ENCODE measurements at regions of chr5 and their contacts with region 1.

Region 1: DNA sequence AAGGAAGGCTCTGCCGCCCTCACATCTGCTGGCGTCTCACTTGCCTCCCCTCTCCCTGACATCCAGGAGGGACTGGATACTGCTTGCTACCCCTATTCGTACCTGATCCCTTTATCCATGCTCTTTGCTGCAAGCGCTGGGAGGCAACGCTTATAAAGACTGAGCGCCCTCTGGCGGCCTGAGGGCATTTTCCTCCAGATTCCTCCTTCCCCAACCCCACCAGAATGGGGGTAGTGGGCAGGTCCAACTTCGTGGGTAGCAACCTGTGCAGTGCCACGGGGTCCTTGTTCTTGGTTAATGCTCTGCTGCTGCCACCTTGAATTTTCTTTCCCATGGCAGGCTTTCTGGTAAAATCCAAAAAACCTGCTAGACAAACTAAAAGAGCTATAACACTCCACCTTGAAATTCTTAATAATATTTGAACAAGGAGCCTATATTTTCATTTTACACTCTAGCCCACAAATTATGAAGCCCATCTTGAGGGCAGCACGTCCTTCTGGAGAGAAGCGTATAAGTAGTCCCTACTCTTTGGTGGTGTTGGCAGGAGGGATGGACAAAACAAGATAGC is 52.4 kb downstream of the JADE2 start:
- DNase-seq: peak; percentile 91
- ATAC-seq: peak; percentile 64

Region 2: DNA sequence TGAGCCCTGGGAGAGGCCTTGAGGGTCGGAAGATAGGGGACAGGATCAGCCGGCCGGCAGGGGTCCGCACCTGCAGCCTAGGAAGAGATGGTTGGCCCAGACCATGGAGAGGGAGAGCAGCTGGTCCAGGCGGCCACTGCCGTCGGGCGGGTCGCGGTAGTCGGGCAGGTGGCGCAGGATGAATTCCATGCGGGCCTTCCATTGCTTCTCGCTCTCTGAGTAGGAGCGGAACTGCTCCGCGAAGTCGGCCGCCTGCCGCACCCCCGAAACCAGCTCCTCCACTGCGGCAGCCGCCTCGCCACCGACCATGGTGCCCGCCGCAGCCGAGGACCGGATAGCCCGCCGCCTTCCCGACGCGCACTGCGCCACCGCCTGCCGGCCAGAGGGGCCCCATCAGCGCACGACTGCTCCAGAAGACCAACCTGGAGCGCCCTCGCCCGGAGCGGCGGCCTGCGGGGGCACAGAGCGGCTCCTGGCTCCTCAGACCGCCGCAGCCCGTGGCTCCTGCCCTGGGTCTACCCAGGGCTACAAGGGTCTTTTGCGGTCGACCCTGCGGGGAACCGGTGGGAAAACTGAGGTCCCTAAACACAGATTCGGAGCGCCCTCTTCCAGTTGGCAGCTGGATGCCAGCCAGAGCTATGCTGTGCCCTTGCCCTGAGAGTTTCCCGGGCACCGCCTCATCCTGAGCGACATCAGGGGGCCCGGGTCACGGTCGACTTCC is 166.2 kb before region 1 on chr5 and contains the start of gene CDKN2AIPNL:
- intact Hi-C with region 1: loop called (anchors 10 kb)
- DNase-seq: peak; percentile 94
- ATAC-seq: peak; percentile 99
- total RNA-seq, gene CDKN2AIPNL: 12.4 TPM

Region 3: DNA sequence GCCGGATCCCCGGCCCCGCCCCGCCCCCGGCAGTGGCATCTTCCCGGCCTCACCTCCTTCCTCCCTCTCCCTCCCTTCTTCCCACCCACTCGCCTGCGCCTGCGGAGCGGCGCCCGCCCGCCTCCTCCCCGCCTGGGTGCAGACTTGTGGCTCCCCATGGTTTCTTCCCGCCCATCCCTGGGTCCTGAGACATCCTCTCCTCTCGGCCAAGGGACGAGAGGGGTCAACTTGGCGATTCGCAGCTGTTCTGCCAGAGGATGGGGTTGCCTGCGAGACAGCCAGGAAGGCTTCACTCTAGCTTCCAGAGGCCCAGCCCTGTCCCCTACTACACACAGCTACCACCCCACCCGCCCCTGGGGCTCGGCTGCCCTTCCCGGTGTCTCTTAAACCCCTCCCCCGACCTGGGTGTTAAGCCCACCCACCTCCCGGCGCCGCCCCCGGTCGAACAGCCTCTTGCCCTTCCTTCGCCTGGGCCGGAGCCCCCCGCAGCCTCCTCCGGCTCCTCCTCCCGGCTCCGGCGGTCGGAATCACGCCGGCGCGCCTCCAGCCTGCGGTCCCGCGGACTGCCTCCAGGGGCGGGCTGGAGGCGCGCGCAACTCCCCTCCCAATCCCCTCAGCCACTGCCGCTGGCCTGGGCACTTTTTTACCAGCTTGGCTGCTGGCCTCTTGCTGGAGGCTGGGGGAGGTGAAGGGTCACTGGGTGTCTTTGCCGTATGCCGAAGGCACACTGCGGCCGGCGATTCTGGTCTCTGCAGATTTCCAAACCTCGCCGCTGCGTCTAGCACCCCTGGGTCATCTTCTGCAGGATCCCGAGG is 50.5 kb before region 1 on chr5:
- intact Hi-C with region 1: loop called (anchors 5 kb)
- DNase-seq: peak; percentile 91
- ATAC-seq: peak; percentile 78

Region 4: GRCh38 chr5:134533115-134533815 is 44.6 kb before region 1 on chr5:
- intact Hi-C with region 1: loop called (anchors 5 kb)
- DNase-seq: peak; percentile 86
- ATAC-seq: peak; percentile 91